Activated CD4-positive, alpha-beta memory T cell treated with anti-CD3 and anti-CD28 coated beads for 36 hours (primary cell): ENCODE measurements at regions of chr3 and their contacts with region 1.

Region 1: GRCh38 chr3:139111392-139112229 is 66.9 kb upstream of the PRR23C start:
- DNase-seq: peak; percentile 71
- H3K4me3 Mint-ChIP-seq: no peak overlapping the region
- H3K27ac Mint-ChIP-seq: no peak overlapping the region
- H3K4me1 Mint-ChIP-seq: peaks cover 1% of the 10 kb centered on the region
- H3K27me3 Mint-ChIP-seq: peaks cover 2% of the 10 kb centered on the region

Region 2: DNA sequence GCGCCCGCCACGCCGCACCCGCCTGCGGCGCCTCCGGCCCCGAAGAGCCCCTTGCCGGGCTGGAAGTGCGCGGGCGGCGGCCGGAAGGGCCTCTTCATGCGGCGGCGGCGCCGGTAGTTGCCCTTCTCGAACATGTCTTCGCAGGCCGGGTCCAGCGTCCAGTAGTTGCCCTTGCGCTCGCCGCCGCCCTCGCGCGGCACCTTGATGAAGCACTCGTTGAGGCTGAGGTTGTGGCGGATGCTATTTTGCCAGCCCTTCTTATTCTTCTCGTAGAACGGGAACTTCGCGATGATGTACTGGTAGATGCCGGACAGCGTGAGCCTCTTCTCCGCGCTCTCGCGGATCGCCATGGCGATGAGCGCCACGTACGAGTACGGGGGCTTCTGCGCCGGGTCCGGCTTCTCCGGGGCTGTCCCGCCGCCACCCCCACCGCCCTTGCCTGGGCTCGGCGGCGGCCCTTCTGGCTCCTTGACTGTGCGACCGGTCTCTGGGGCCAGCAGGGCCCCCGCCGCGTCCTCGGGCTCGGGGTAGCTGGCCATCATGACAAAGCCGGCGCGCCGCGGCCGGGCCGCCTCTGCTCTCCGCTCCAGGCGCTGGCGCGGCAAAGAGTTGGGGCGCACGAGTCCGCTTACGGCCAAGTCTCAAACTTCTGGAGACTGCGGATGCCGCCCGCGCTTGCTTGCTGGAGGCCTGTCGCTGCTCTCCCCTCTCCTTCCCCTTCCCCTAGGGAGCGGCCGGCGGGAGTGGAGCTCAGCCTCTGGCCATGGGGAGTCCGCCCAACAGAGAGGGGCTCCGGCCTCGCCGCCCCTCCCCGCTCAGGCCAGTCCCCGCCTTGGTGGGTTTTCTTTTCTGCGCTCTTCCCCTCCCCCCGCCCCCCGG is 165.2 kb before region 1 on chr3:
- CTCF ChIA-PET with region 1: no interaction called
- POLR2A ChIA-PET with region 1: no interaction called
- intact Hi-C with region 1: loop called (anchors 5 kb)
- DNase-seq: peak; percentile 46
- H3K4me3 Mint-ChIP-seq: peak overlapping the region; percentile 60
- H3K27ac Mint-ChIP-seq: no peak overlapping the region
- H3K4me1 Mint-ChIP-seq: peaks cover 40% of the 10 kb centered on the region
- H3K27me3 Mint-ChIP-seq: peaks cover 78% of the 10 kb centered on the region

Region 3: GRCh38 chr3:139123377-139124095 is 11.9 kb after region 1 on chr3:
- CTCF ChIA-PET with region 1: interaction called, 12 read pairs
- POLR2A ChIA-PET with region 1: no interaction called
- intact Hi-C with region 1: no loop called
- DNase-seq: no peak
- H3K4me3 Mint-ChIP-seq: no peak overlapping the region
- H3K27ac Mint-ChIP-seq: no peak overlapping the region
- H3K4me1 Mint-ChIP-seq: no peaks in the 10 kb centered on the region
- H3K27me3 Mint-ChIP-seq: no peaks in the 10 kb centered on the region

Region 4: GRCh38 chr3:139159356-139159755 is 47.7 kb after region 1 on chr3:
- CTCF ChIA-PET with region 1: no interaction called
- POLR2A ChIA-PET with region 1: no interaction called
- intact Hi-C with region 1: no loop called
- DNase-seq: no peak
- H3K4me3 Mint-ChIP-seq: no peak overlapping the region
- H3K27ac Mint-ChIP-seq: no peak overlapping the region
- H3K4me1 Mint-ChIP-seq: no peaks in the 10 kb centered on the region
- H3K27me3 Mint-ChIP-seq: no peaks in the 10 kb centered on the region

Region 5: GRCh38 chr3:139329345-139329850 is 217.8 kb after region 1 on chr3:
- CTCF ChIA-PET with region 1: interaction called, 68 read pairs
- POLR2A ChIA-PET with region 1: no interaction called
- intact Hi-C with region 1: loop called (anchors 2 kb)
- DNase-seq: peak; percentile 93
- H3K4me3 Mint-ChIP-seq: peak overlapping the region; percentile 41
- H3K27ac Mint-ChIP-seq: no peak overlapping the region
- H3K4me1 Mint-ChIP-seq: peaks cover 3% of the 10 kb centered on the region
- H3K27me3 Mint-ChIP-seq: peaks cover 23% of the 10 kb centered on the region